A673 (cell line): ENCODE measurements at regions of chr1 and their contacts with region 1.

Region 1: DNA sequence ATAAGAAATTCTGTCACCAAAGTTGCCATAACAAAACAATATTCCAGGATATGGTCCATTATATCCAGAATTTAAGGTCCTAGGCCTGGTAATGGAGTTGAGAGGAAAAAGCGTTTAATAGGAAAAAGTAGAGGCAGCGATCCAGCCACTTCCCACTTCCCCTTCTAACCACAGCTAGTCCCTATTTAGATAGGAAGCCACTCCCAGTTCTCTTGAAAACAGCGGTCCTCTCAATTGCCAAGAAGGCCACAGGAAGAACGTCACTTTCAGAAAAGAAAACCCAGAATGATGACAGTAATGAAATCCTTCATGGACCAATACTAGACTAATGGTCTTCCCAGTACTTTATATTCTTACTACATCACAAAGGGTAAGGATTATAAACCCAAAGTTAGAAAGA is 38.6 kb downstream of the ABL2 start:
- DNase-seq: no peak
- H3K4me3 ChIP-seq: no peak overlapping the region
- H3K27ac ChIP-seq: no peak overlapping the region
- H3K4me1 ChIP-seq: no peaks in the 10 kb centered on the region
- H3K27me3 ChIP-seq: no peaks in the 10 kb centered on the region
- CTCF ChIP-seq: no peak

Region 2: GRCh38 chr1:179066471-179066870 is 124.4 kb before region 1 on chr1:
- CTCF ChIA-PET with region 1: no interaction called
- POLR2A ChIA-PET with region 1: no interaction called
- intact Hi-C with region 1: no loop called
- DNase-seq: no peak
- H3K4me3 ChIP-seq: no peak overlapping the region
- H3K27ac ChIP-seq: no peak overlapping the region
- H3K4me1 ChIP-seq: peaks cover 3% of the 10 kb centered on the region
- H3K27me3 ChIP-seq: no peaks in the 10 kb centered on the region
- CTCF ChIP-seq: no peak

Region 3: DNA sequence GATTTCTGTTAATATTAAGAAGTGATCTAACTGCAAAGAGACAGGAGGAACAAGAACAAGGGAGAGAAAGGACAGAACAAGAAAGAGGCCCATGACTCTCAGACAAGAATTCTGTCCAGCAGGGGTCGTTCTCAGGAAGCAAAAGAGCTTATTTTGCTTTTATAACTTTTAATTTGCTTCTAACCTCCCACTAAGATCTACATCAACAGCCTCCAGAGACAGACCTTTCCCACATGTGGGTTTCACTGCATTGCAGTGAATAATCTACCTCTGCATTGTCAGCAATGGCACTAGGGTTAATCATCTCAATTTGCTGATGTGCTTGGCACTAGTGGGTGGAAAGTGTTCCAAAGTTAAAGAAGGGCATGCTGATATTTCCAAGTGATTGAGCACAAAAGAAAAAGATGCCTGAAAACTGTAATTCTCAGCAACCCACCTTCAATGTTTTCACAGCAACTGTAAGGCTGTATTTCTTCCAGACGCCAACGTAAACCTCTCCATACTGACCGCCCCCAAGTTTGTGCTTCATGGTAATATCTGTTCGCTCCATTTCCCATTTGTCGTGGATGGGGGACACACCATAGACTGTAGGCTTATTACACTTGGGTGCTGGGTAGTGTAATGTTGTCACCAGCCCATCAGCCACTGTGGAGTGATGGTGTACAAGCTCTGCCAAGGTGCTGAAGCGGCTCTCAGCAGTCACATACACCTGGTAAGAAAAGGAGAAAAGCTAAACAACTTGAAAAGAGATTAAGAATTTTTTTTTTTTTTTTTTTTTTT is 69.5 kb before region 1 on chr1:
- CTCF ChIA-PET with region 1: no interaction called
- POLR2A ChIA-PET with region 1: no interaction called
- intact Hi-C with region 1: loop called (anchors 2 kb)
- DNase-seq: peak; percentile 68
- H3K4me3 ChIP-seq: no peak overlapping the region
- H3K27ac ChIP-seq: no peak overlapping the region
- H3K4me1 ChIP-seq: no peaks in the 10 kb centered on the region
- H3K27me3 ChIP-seq: no peaks in the 10 kb centered on the region
- CTCF ChIP-seq: peak; percentile 76

Region 4: GRCh38 chr1:179278920-179279319 is 88.1 kb after region 1 on chr1:
- CTCF ChIA-PET with region 1: no interaction called
- POLR2A ChIA-PET with region 1: no interaction called
- intact Hi-C with region 1: no loop called
- DNase-seq: no peak
- H3K4me3 ChIP-seq: no peak overlapping the region
- H3K27ac ChIP-seq: no peak overlapping the region
- H3K4me1 ChIP-seq: no peaks in the 10 kb centered on the region
- H3K27me3 ChIP-seq: no peaks in the 10 kb centered on the region
- CTCF ChIP-seq: no peak

Region 5: DNA sequence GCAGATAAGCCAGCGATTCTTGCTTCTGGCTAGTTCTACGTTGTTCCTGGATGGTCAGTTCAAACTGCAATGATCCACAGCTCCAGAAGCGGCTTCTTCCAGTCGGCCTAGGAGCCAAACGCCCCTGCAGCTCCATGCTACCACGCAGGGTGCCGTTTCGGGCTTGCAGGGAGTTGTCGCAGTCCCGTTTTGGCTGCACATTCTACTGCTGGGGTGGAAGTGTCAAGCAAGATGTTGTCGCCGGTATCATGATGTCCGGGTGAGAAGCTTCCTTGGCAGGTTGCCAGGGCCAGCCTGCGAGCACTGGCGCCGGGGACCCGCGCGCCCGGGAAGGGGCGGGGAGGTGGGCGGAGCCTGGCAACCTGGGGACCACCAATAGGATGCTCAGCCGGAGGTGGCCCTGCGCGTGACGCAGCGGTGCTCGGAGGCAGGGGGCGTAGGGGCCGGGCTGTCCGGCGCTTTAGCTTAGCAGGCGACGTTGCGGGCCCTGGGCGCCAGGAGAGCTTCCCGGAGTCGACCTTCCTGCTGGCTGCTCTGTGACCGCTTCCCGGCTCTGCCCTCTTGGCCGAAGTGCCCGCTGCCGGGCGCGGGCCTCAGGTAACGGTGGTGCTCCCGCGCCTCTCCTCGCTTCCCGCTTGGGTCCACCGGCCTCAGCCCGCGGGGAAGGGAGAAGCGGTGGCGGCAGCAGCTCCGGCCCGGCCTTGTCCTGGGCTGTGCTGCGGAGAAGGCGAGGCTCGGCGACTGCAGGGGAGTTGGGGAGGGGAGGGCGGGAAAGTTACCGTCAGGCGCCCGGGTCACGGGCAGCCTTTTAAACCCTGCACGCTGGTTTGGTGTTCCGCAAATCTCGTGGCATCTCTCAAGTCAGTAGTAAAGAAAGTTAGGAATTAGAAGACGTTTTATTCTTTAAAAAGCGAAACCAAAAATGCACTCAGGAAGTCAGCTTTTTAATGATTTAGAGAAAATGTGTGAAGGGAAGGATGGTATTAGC is 102.8 kb after region 1 on chr1 and contains the start of gene SOAT1:
- CTCF ChIA-PET with region 1: interaction called, 10 read pairs
- POLR2A ChIA-PET with region 1: no interaction called
- intact Hi-C with region 1: no loop called
- DNase-seq: peak; percentile 95
- H3K4me3 ChIP-seq: peak within 1 kb of the TSS; percentile 66
- H3K27ac ChIP-seq: peak within 1 kb of the TSS; percentile 83
- H3K4me1 ChIP-seq: peaks cover 9% of the 10 kb centered on the region
- H3K27me3 ChIP-seq: no peaks in the 10 kb centered on the region
- CTCF ChIP-seq: no peak
- total RNA-seq, gene SOAT1: 49.9 and 53.0 TPM in 2 replicates

Region 6: DNA sequence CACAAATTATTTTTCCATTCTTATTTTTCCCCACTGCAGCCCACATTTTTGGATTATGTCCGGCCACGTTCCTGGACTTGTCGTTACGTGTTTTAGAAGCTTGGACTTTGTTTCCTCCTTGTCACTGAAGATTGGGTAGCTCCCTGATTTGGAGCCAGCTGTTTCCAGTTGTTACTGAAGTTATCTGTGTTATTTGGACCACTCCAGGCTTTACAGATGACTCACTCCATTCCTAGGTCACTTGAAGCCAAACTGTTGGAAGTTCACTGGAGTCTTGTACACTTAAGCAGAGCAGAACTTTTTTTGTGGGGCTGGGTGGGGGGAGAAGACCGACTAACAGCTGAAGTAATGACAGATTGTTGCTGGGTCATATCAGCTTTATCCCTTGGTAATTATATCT is 162.7 kb after region 1 on chr1:
- CTCF ChIA-PET with region 1: no interaction called
- POLR2A ChIA-PET with region 1: no interaction called
- intact Hi-C with region 1: loop called (anchors 5 kb)
- DNase-seq: no peak
- H3K4me3 ChIP-seq: no peak overlapping the region
- H3K27ac ChIP-seq: no peak overlapping the region
- H3K4me1 ChIP-seq: no peaks in the 10 kb centered on the region
- H3K27me3 ChIP-seq: no peaks in the 10 kb centered on the region
- CTCF ChIP-seq: no peak